ENCODE measurements at regions of chr1 and their contacts with region 1.

Region 1: GRCh38 chr1:235160957-235161684 is at the start of gene RBM34:
- DNase-seq: peak; percentile 55
- H3K4me3 ChIP-seq: peak within 1 kb of the TSS; percentile 78
- H3K27me3 ChIP-seq: no peaks in the 10 kb centered on the region
- CTCF ChIP-seq: peak; percentile 44
- polyA plus RNA-seq, gene RBM34: 24.4 and 34.0 TPM in 2 replicates

Region 2: DNA sequence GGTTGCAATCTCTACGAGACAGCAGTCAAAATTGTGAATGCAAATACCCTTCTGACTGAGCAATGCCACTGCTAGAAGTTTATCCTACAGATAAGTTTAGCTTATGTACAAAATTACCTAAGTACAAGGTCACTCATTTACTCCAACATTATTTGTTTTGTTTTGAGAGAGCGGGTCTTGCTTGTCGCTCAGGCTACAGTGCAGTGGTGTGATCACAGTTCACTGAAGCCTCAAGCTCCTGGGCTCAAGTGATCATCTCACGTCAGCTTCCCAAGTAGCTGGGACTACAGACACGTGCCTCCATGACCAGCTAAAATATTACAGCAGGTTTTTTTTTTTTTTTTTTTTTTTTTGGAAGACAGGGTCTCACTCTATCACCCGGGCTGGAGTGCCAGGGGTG is 15.5 kb before region 1 on chr1:
- CTCF ChIA-PET with region 1: interaction called, 3 read pairs
- POLR2A ChIA-PET with region 1: interaction called, 12 read pairs
- DNase-seq: no peak
- H3K4me3 ChIP-seq: no peak overlapping the region
- H3K27me3 ChIP-seq: no peaks in the 10 kb centered on the region
- CTCF ChIP-seq: no peak

Region 3: DNA sequence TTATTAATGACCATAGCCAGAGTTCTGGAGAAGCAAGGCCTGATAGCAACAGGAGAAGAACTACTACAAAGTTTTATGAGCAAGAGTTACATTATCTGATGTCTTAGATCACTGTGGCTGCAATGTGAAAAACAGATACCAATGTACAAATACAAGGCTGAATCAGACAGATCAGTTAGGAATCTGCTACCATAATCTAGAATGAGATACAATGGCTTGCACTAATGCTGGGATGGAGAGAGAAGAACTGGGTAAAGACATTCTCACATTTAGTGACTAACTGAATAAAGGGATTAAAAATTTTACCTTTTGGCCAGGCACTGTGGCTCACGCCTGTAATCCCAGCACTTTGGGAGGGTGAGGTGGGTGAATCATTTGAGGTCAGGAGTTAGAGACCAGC is 125.5 kb after region 1 on chr1:
- CTCF ChIA-PET with region 1: no interaction called
- POLR2A ChIA-PET with region 1: no interaction called
- DNase-seq: no peak
- H3K4me3 ChIP-seq: no peak overlapping the region
- H3K27me3 ChIP-seq: no peaks in the 10 kb centered on the region
- CTCF ChIP-seq: no peak